H1 (cell line): ENCODE measurements at regions of chr12 and their contacts with region 1.

Region 1: GRCh38 chr12:77049767-77050353 is 15.5 kb downstream of the E2F7 start:
- DNase-seq: no peak
- H3K4me3 ChIP-seq: no peak overlapping the region
- H3K27ac ChIP-seq: no peak overlapping the region
- H3K4me1 ChIP-seq: no peaks in the 10 kb centered on the region
- H3K27me3 ChIP-seq: no peaks in the 10 kb centered on the region
- CTCF ChIP-seq: peak in 2 of 3 experiments; percentile 32 to 65; a peak in 2 of 4 replicates
- EP300 ChIP-seq: no peak
- POLR2A ChIP-seq: no peak
- RAD21 ChIP-seq: peak; percentile 48 to 56; a peak in 3 of 4 replicates

Region 2: DNA sequence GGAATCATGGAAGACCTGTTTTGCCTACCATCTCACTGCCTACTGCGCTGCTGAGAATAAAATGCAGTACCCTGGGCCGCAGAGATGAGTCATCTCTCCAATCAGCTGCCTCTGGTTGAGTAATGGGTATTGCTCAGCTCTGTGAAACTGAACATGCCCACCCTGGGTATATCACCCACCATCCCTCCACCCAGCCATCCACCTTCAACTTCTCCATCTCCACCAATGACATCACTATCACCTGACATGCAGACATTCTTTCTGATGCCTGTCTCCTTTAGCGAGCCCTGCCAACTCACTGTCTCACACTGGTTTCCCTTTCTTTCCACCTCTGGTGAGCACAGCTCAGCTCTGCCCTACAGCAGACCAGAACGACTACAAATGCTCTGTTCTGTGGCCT is 18.1 kb before region 1 on chr12:
- CTCF ChIA-PET with region 1: interaction called, 24 read pairs
- POLR2A ChIA-PET with region 1: interaction called, 3 read pairs
- DNase-seq: no peak
- H3K4me3 ChIP-seq: no peak overlapping the region
- H3K27ac ChIP-seq: no peak overlapping the region
- H3K4me1 ChIP-seq: no peaks in the 10 kb centered on the region
- H3K27me3 ChIP-seq: no peaks in the 10 kb centered on the region
- CTCF ChIP-seq: no peak
- EP300 ChIP-seq: no peak
- POLR2A ChIP-seq: no peak
- RAD21 ChIP-seq: no peak

Region 3: GRCh38 chr12:77060136-77060882 is 10.4 kb after region 1 on chr12:
- CTCF ChIA-PET with region 1: interaction called, 34 read pairs
- POLR2A ChIA-PET with region 1: interaction called, 20 read pairs
- DNase-seq: no peak
- H3K4me3 ChIP-seq: no peak overlapping the region
- H3K27ac ChIP-seq: no peak overlapping the region
- H3K4me1 ChIP-seq: peaks cover 0 to 7% (median 0%) of the 10 kb centered on the region in 4 experiments; a peak in 2 of 7 replicates
- H3K27me3 ChIP-seq: peaks cover 0 to 1% (median 0%) of the 10 kb centered on the region in 4 experiments; a peak in 1 of 7 replicates
- CTCF ChIP-seq: no peak
- EP300 ChIP-seq: no peak
- POLR2A ChIP-seq: no peak
- RAD21 ChIP-seq: no peak

Region 4: DNA sequence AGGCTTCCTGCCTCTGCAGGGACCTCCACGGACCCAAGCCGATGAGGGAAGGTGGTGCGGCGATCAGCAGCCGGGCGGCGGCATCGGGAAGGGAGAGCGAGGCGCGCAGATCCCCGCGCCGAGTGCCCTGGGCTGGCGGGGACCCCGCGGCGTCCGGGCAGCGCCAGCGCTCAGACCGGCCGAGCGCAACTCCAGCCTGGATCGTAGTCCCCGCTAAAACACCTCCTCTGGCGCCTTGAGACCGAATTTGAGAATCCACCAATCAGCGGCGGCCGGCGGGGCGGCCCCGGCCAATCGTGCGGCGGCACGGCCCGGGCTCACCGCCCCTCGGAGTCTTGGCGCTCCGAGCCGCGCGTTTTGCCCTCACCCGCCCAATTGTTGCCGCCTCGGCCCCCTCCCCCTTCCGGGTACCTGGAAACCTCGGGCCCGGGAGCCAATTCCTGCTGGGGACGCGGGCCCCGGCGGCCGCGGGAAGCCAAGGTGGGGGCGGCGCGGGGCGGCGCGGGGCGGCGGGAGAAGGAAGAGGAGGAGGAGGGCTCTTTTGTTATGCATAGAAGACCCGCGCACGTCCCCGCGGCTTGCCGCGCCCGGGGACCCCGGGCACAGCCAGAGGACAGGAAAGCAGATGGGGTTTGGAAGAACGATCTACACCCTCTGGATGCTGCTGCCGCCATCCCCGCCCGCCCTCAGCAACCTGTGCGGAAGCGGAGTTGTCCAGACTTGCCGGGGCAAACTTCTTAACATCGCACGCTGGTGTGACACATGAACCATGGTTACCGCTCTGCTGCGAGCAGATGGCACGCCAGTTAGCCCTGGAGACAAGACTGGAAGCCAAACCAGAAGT is 15.7 kb after region 1 on chr12 and contains the start of gene E2F7:
- CTCF ChIA-PET with region 1: interaction called, 34 read pairs
- POLR2A ChIA-PET with region 1: interaction called, 20 read pairs
- DNase-seq: peak; percentile 92 to 97
- H3K4me3 ChIP-seq: peak within 1 kb of the TSS; percentile 82 to 97 (median 88)
- H3K27ac ChIP-seq: peak within 1 kb of the TSS; percentile 92
- H3K4me1 ChIP-seq: peaks cover 0 to 7% (median 0%) of the 10 kb centered on the region in 4 experiments; a peak in 2 of 7 replicates
- H3K27me3 ChIP-seq: no peaks in the 10 kb centered on the region
- CTCF ChIP-seq: no peak
- EP300 ChIP-seq: no peak; a peak in 1 of 3 replicates
- POLR2A ChIP-seq: peak; percentile 89 to 94
- RAD21 ChIP-seq: no peak
- total RNA-seq, gene E2F7: 18.5 and 25.2 TPM in 2 replicates

Region 5: GRCh38 chr12:77133566-77133965 is 83.7 kb after region 1 on chr12:
- CTCF ChIA-PET with region 1: no interaction called
- POLR2A ChIA-PET with region 1: no interaction called
- DNase-seq: peak in 1 of 2 experiments; percentile 80
- H3K4me3 ChIP-seq: no peak overlapping the region
- H3K27ac ChIP-seq: no peak overlapping the region
- H3K4me1 ChIP-seq: no peaks in the 10 kb centered on the region
- H3K27me3 ChIP-seq: no peaks in the 10 kb centered on the region
- CTCF ChIP-seq: no peak
- EP300 ChIP-seq: no peak
- POLR2A ChIP-seq: no peak
- RAD21 ChIP-seq: no peak